GM10248 (cell line): ENCODE measurements at regions of chr2 and their contacts with region 1.

Region 1: GRCh38 chr2:79899196-79899595 is 386.3 kb downstream of the CTNNA2 start:
- DNase-seq: no peak
- CTCF ChIP-seq: no peak

Region 2: DNA sequence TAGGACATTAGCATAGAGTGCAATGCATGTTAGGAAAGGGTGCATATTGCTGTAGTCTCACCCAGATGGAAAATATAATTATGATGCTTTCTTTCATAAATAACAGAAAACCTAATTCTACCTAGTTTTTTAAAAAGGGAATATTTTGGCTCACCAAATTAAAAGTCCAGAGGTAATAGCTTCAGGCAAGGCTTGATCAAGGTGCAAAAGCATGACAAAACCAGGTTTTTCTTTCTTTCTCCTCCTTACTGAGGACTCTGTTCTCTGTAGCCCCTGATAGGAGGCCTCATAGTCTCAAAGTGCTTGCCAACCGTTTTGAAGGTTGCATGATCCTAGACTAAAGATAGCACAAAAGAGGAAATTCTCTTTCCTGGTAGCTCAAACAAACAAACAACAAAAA is 36.4 kb before region 1 on chr2:
- CTCF ChIA-PET with region 1: no interaction called
- POLR2A ChIA-PET with region 1: no interaction called
- DNase-seq: no peak
- CTCF ChIP-seq: no peak

Region 3: GRCh38 chr2:79887747-79888374 is 11.3 kb before region 1 on chr2:
- CTCF ChIA-PET with region 1: interaction called, 11 read pairs
- POLR2A ChIA-PET with region 1: no interaction called
- DNase-seq: peak; percentile 28
- CTCF ChIP-seq: peak; percentile 60

Region 4: DNA sequence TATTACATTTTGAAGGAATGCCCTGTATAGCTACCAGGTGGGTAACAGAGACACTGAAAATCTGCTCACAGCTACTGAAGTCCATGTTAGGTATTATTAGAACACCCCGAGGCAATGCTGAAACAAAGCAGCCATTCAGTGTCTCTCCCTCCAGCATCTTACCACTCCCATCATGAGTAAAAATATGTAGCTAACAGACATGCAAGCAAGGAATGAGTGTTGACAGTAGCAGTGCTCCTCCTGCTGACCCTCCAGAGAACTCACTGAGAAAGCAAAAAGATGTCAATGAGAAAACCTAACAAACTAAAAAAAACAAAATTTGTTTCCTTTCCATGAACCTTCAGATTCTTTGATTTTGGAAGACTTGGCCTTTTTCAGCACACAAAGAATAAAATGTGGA is 11.4 kb after region 1 on chr2:
- CTCF ChIA-PET with region 1: interaction called, 10 read pairs
- POLR2A ChIA-PET with region 1: no interaction called
- DNase-seq: no peak
- CTCF ChIP-seq: no peak